ENCODE measurements at regions of chr6 and their contacts with region 1.

Region 1: GRCh38 chr6:71510057-71510713 is 221.6 kb downstream of the OGFRL1 start:
- DNase-seq: peak; percentile 56 to 68
- H3K4me3 ChIP-seq: no peak overlapping the region
- H3K27ac ChIP-seq: no peak overlapping the region
- H3K4me1 ChIP-seq: peaks cover 11 to 16% of the 10 kb centered on the region in 2 donors
- H3K27me3 ChIP-seq: no peaks in the 10 kb centered on the region
- CTCF ChIP-seq: peak in 5 of 6 experiments; percentile 57 to 84 (median 80)
- POLR2A ChIP-seq: no peak

Region 2: DNA sequence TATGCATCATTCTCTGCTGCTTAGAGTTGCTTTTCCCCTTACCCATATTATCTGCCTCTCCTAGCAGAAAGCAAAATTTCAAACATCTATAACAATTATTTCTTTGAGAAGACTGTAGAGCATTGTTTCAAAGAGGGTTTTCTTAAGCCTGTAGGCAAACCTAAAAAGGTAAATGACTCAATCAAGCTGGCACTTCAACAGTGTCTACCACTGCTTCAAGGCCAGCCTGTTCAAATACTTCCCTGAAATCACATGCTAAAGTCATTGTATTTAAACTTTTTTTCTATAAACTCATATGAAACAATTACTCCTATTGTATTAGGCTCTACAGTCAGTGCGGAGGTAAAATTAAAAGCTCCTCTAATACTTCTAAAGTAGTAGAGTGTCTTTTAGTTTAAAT is 134.5 kb before region 1 on chr6:
- intact Hi-C with region 1: loop called (anchors 5 kb)
- DNase-seq: no peak
- H3K4me3 ChIP-seq: no peak overlapping the region
- H3K27ac ChIP-seq: no peak overlapping the region
- H3K4me1 ChIP-seq: peaks cover 0 to 6% of the 10 kb centered on the region in 2 donors
- H3K27me3 ChIP-seq: no peaks in the 10 kb centered on the region
- CTCF ChIP-seq: no peak
- POLR2A ChIP-seq: no peak

Region 3: DNA sequence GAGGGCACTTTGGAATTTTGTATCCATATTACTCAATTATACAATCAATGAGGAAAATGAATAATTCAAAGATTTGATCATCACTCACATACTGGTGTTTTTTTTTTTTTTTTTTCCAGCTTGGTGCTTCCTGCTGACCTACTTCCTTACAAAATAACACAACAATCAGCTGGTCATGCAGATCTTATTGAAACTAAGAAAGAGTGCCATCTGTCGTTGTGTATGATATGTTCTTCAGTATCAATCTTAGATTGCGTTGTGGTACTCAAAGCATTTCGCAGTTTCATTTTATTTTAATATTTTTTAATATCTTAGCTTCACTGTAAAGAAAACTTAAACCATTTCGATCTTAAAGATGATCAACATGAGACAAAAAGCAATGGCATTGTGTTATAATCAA is 66.0 kb before region 1 on chr6:
- intact Hi-C with region 1: no loop called
- DNase-seq: no peak
- H3K4me3 ChIP-seq: no peak overlapping the region
- H3K27ac ChIP-seq: no peak overlapping the region
- H3K4me1 ChIP-seq: no peaks in the 10 kb centered on the region
- H3K27me3 ChIP-seq: no peaks in the 10 kb centered on the region
- CTCF ChIP-seq: peak in 2 of 6 experiments; percentile 21 to 40
- POLR2A ChIP-seq: no peak

Region 4: DNA sequence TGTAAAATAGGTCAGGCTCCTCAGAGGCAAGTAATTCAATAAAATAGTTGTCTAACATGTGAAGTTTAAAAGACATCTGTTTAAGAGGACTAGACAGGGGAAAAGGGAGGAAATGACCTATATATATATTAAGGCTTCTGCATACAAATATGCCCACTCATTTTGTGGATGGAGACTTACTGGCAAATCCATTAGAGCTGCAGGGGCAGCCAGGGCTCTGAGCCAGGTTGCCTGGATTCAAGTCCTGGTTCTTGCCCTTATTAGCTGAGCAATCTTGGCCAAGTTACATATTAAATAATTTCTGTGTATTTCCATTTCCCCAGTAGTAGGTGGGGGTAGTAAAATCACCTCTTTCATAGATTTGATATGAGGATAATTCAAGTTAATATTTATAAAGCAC is 89.2 kb after region 1 on chr6:
- intact Hi-C with region 1: no loop called
- DNase-seq: no peak
- H3K4me3 ChIP-seq: no peak overlapping the region
- H3K27ac ChIP-seq: no peak overlapping the region
- H3K4me1 ChIP-seq: no peaks in the 10 kb centered on the region
- H3K27me3 ChIP-seq: no peaks in the 10 kb centered on the region
- CTCF ChIP-seq: no peak
- POLR2A ChIP-seq: no peak

Measured in thyroid gland (tissue), 4 donors.